SK-N-SH (cell line): ENCODE measurements at regions of chr22 and their contacts with region 1.

Region 1: GRCh38 chr22:49046546-49047361 is 780.9 kb downstream of the BRD1 start:
- DNase-seq: peak; percentile 87
- H3K4me3 ChIP-seq: no peak overlapping the region
- H3K27ac ChIP-seq: peak overlapping the region in 1 of 2 experiments; percentile 12; a peak in 1 of 4 replicates
- H3K4me1 ChIP-seq: peaks cover 0 to 36% of the 10 kb centered on the region in 2 experiments; a peak in 2 of 4 replicates
- H3K27me3 ChIP-seq: no peaks in the 10 kb centered on the region; the same call in 1 of the 2 replicates
- CTCF ChIP-seq: peak; percentile 34; the same call in 1 of the 2 replicates
- EP300 ChIP-seq: no peak
- RAD21 ChIP-seq: peak; percentile 79

Region 2: DNA sequence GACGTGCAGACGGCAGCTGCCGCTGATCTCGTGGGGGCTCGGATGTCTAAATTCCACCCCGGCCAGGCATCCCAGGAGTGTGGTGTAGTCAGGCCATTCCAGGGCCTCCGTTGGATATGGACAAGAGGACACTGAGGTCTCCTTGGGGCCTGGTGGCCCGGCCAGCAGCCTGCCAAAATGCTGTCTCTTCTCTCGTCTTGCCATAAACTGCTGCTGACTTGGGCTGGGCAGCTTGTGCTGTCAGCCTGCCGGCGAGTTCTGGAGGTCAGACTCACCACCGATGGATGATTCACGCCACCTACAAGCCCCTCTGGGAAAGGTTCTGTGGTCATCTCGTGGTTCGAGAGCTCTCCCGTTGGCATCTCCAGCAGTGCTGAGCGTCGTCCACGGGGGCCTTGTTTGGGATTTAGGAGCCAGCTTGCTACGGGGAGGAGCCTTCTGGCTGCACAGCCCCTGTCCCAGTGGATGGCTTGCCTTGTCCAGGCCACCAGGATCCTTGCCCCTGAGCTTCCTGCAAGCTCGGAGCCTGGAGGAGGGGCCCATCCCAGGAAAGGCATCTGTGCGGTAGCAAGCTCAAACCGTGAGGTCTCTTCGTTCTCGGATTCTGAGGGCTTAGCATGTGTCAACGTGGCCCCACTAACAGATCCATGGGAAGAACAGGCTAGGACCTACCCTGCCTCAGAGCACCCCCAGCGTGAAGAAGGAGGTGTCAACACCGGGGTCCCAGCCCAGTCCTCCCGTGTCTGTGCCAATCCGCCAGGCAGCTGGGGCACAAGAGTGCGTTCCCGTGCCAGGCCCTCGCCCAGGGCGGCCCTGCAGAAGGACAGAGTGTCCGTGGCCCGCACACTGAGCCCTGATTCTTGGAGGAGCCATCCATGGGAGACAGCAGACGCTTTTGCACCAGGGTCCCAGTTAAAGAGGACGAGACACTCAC is 333.2 kb before region 1 on chr22:
- CTCF ChIA-PET with region 1: no interaction called
- POLR2A ChIA-PET with region 1: no interaction called
- DNase-seq: no peak
- H3K4me3 ChIP-seq: no peak overlapping the region
- H3K27ac ChIP-seq: no peak overlapping the region
- H3K4me1 ChIP-seq: no peaks in the 10 kb centered on the region; a peak in 1 of 4 replicates
- H3K27me3 ChIP-seq: no peaks in the 10 kb centered on the region; the same call in 1 of the 2 replicates
- CTCF ChIP-seq: no peak
- EP300 ChIP-seq: no peak
- RAD21 ChIP-seq: no peak

Region 3: DNA sequence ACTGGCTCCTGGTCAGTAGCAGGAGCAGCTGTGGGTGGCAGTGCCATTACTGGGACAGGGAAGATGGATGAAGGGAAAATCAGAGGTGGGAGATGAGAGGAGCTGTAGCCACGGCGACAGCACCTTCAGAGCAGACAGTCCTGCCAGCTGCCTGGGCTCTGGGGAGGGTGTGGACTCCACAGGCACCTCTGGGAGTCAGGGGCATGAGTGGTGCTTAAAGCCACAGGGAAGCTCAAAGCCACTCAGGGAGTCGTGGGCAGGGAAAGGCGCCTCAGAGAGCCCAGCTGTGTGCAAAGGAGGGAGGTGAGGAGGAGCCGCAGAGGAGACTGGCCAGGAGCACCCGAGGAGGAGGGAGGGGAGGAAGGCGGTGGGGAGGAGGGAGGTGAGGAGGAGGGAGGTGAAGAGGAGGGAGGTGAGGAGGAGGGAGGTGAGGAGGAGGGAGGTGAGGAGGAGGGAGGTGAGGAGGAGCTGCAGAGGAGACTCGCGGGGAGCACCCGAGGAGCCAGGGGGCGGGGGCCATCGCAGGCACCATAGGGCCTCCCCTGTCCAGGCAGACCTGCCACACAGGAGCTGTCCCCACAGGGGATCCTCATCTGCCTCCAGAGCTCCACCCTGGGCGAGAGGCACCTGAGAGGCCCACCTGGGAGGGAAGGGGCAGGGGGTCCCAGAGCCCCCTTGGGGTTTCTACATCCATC is 196.6 kb before region 1 on chr22:
- CTCF ChIA-PET with region 1: no interaction called
- POLR2A ChIA-PET with region 1: no interaction called
- DNase-seq: no peak
- H3K4me3 ChIP-seq: no peak overlapping the region
- H3K27ac ChIP-seq: no peak overlapping the region
- H3K4me1 ChIP-seq: no peaks in the 10 kb centered on the region; a peak in 1 of 4 replicates
- H3K27me3 ChIP-seq: no peaks in the 10 kb centered on the region
- CTCF ChIP-seq: no peak
- EP300 ChIP-seq: no peak
- RAD21 ChIP-seq: no peak

Region 4: GRCh38 chr22:49035818-49036457 is 10.8 kb before region 1 on chr22:
- CTCF ChIA-PET with region 1: interaction called, 18 read pairs
- POLR2A ChIA-PET with region 1: no interaction called
- DNase-seq: no peak
- H3K4me3 ChIP-seq: no peak overlapping the region
- H3K27ac ChIP-seq: no peak overlapping the region
- H3K4me1 ChIP-seq: peaks cover 0 to 22% of the 10 kb centered on the region in 2 experiments; a peak in 1 of 4 replicates
- H3K27me3 ChIP-seq: no peaks in the 10 kb centered on the region
- CTCF ChIP-seq: no peak
- EP300 ChIP-seq: no peak
- RAD21 ChIP-seq: no peak

Region 5: GRCh38 chr22:49062155-49062801 is 15.5 kb after region 1 on chr22:
- CTCF ChIA-PET with region 1: interaction called, 16 read pairs
- POLR2A ChIA-PET with region 1: no interaction called
- DNase-seq: no peak
- H3K4me3 ChIP-seq: no peak overlapping the region
- H3K27ac ChIP-seq: no peak overlapping the region; a peak in 1 of 4 replicates
- H3K4me1 ChIP-seq: peaks cover 0 to 22% of the 10 kb centered on the region in 2 experiments; a peak in 1 of 4 replicates
- H3K27me3 ChIP-seq: no peaks in the 10 kb centered on the region
- CTCF ChIP-seq: no peak
- EP300 ChIP-seq: no peak
- RAD21 ChIP-seq: no peak

Region 6: GRCh38 chr22:49170053-49170452 is 123.3 kb after region 1 on chr22:
- CTCF ChIA-PET with region 1: interaction called, 14 read pairs
- POLR2A ChIA-PET with region 1: no interaction called
- DNase-seq: no peak
- H3K4me3 ChIP-seq: no peak overlapping the region
- H3K27ac ChIP-seq: no peak overlapping the region
- H3K4me1 ChIP-seq: no peaks in the 10 kb centered on the region; a peak in 1 of 4 replicates
- H3K27me3 ChIP-seq: no peaks in the 10 kb centered on the region
- CTCF ChIP-seq: no peak
- EP300 ChIP-seq: no peak
- RAD21 ChIP-seq: peak; percentile 48

Region 7: DNA sequence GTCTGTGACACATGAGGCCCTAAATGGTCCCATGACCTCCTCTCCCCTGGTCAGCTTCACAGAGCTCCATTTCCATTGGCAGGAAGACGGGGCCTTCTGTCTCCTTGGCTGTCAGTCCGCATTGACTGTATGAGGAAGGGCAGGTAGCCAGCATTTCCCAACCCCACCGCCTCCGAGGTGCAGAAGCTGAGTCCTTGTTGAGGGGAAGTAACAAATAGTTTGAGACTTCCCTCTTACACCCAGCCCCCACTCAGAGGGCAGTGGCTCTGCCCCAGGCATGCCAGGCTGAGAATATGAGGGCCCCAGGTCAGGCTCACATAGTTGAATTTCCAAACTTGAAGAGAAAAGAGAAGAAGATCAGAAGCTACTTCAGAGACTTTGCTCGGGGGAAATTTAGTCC is 169.8 kb after region 1 on chr22:
- CTCF ChIA-PET with region 1: interaction called, 10 read pairs
- POLR2A ChIA-PET with region 1: no interaction called
- DNase-seq: no peak
- H3K4me3 ChIP-seq: no peak overlapping the region
- H3K27ac ChIP-seq: no peak overlapping the region
- H3K4me1 ChIP-seq: no peaks in the 10 kb centered on the region
- H3K27me3 ChIP-seq: no peaks in the 10 kb centered on the region
- CTCF ChIP-seq: no peak
- EP300 ChIP-seq: no peak
- RAD21 ChIP-seq: no peak

Region 8: DNA sequence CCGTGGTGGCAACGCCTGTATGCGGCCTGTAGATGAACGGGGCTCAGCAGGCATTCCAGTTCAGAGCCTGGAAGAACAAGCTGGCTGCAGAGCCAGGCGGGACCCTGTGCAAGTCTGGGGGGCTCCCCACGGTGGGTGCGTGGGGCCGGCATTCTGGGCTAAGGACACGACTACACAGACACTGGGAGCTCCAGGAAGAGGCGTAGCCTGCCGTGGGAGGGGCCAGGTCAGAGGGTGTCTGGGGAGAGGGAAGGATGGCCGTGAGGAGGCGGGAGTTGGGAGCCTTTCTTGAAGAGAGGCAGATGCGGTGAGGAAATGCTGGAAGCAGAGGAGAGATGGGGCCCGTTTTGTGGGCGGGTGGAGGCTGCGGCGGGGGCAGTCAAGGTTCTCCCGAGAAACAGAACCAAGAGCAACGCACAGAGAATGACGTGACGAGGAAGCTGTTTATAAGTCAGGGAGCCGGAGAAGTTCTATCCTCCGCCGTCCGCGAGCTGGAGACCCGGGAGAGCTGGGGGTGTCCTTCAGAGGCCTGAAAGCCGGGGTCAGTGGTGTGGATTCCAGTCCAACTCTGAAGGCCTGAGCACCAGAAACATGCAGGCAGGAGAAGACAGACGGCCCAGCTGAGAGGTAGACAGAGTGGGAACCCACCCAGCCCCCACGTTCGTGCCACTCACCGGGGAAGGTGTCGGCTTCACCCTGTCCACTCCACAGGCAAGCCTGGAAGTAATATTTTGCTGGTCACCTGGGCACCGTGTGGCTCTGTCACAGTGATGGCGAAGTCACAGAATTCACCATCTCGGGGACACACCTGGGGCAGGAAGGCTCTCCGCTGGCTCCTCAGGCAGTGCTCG is 251.3 kb after region 1 on chr22:
- CTCF ChIA-PET with region 1: interaction called, 103 read pairs
- POLR2A ChIA-PET with region 1: no interaction called
- DNase-seq: peak; percentile 7
- H3K4me3 ChIP-seq: no peak overlapping the region
- H3K27ac ChIP-seq: no peak overlapping the region
- H3K4me1 ChIP-seq: no peaks in the 10 kb centered on the region; a peak in 1 of 4 replicates
- H3K27me3 ChIP-seq: no peaks in the 10 kb centered on the region; the same call in 1 of the 2 replicates
- CTCF ChIP-seq: no peak
- EP300 ChIP-seq: no peak
- RAD21 ChIP-seq: no peak